Activated CD8-positive, alpha-beta T cell treated with anti-CD3 and anti-CD28 coated beads, Interleukin-2, amount 10 ng/mL, durations not matched to agents 7 days and 5 days (primary cell): ENCODE measurements at regions of chr9 and their contacts with region 1.

Region 1: GRCh38 chr9:101387871-101388506 is 3.2 kb upstream of the BAAT start:
- DNase-seq: peak; percentile 26
- ATAC-seq: peak; percentile 71
- H3K4me3 Mint-ChIP-seq: no peak overlapping the region
- H3K27ac Mint-ChIP-seq: no peak overlapping the region
- H3K4me1 Mint-ChIP-seq: peaks cover 10% of the 10 kb centered on the region
- H3K27me3 Mint-ChIP-seq: no peaks in the 10 kb centered on the region

Region 2: DNA sequence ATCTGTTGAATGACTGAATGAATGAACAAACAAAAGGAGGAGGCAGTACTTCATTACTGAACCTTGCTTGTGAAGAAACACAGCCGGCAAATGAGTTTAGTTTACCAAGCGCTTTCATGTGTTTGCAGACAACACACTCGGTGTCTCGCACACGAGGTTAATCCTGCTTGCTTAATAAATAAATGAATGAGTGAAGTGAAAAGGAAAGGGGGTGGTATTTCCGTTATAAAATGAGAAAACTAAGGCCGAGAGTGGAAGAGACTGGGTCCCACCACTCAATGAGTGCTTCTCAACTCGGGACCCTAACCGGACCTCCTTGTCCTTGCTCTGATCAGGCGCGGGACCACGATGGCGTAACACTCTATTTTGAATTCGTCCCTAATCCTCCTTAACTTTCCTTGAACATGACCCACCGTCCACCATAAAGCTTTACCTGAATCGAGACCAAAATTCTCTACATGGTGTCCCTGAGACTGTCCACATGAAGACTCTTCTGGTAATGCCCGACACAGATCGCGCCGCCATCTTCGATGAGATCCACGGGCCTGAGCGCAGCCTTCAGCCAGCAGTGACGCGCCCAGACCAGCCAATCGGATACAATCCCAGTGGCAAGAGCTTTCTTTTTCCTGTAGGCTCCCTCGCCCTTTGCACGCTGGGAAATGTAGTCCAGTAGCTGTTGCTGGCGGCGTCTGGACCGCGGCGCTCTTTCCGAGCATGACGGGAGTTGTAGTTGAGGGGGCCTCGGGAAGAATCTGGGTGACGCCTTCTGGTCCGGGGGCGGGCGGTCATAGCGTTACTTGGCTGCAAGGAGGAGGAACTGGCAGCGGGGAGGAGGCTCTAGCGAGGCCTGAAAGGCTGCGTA is 10.3 kb after region 1 on chr9 and contains the starts of genes MRPL50 and ZNF189:
- CTCF ChIA-PET with region 1: interaction called, 20 read pairs
- POLR2A ChIA-PET with region 1: interaction called, 6 read pairs
- DNase-seq: peak; percentile 98
- ATAC-seq: peak; percentile 97
- H3K4me3 Mint-ChIP-seq: peak within 1 kb of the TSS; percentile 90
- H3K27ac Mint-ChIP-seq: peak within 1 kb of the TSS; percentile 97
- H3K4me1 Mint-ChIP-seq: peaks cover 38% of the 10 kb centered on the region
- H3K27me3 Mint-ChIP-seq: no peaks in the 10 kb centered on the region
- total RNA-seq, gene MRPL50: 9.4 to 10.2 TPM
- total RNA-seq, gene ZNF189: 9.7 to 10.4 TPM